ENCODE measurements at regions of chr5 and their contacts with region 1.

Region 1: GRCh38 chr5:69414885-69415583 is at the start of gene MARVELD2:
- DNase-seq: peak; percentile 96
- H3K4me3 ChIP-seq: peak within 1 kb of the TSS; percentile 81
- H3K4me3 Mint-ChIP-seq: peak within 1 kb of the TSS; percentile 92
- H3K27ac Mint-ChIP-seq: peak within 1 kb of the TSS; percentile 93
- H3K4me1 ChIP-seq: peaks cover 9% of the 10 kb centered on the region
- H3K4me1 Mint-ChIP-seq: peaks cover 22% of the 10 kb centered on the region
- H3K27me3 ChIP-seq: no peaks in the 10 kb centered on the region
- H3K27me3 Mint-ChIP-seq: no peaks in the 10 kb centered on the region
- CTCF ChIP-seq: peak; percentile 22 to 76
- total RNA-seq, gene MARVELD2: 47.2 and 50.3 TPM in 2 replicates

Region 2: DNA sequence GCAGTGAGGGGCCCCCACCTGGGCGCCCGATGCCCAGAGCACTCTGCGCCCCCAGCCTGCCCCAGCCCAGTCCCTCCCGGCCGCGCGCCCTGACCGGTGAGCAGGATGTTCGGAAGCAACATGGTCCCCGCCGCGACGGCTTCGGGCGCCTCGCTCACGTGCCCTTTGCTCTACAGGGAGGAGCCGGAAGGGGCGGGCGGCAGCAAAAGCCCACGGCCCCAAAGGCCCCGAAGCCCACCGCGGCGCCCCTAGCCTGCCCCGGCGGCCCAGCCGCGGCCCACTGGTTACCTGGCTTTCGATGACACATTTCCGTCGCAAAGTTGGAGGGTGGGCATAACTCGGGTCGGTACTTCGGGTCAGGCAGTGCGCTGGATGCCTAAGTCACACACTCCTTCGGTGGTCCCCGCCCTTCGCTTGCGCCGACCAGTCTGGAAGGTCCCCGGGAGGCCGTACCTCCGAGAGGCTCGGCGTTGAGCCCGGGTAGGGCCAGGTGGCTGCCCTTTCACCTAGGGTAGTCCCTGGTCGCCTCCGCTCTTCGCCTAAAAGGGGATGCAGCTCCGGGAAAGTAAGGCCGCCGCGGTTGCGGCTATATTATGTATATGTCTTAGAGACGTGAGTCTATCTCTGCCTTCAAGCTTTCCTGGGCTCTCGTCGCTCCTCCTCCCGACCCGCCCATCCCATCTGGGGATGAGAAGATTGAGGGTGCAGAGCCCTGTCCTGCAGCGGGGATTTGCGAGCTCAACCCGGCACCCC is 45.5 kb before region 1 on chr5 and contains the starts of genes AK6, RAD17 and TAF9:
- CTCF ChIA-PET with region 1: no interaction called
- POLR2A ChIA-PET with region 1: no interaction called
- intact Hi-C with region 1: loop called (anchors 5 kb)
- DNase-seq: peak; percentile 94 to 95
- H3K4me3 ChIP-seq: peak within 1 kb of the TSS; percentile 67
- H3K4me3 Mint-ChIP-seq: peak within 1 kb of the TSS; percentile 90
- H3K27ac Mint-ChIP-seq: peak within 1 kb of the TSS; percentile 99
- H3K4me1 ChIP-seq: peaks cover 15% of the 10 kb centered on the region
- H3K4me1 Mint-ChIP-seq: peaks cover 8% of the 10 kb centered on the region
- H3K27me3 ChIP-seq: no peaks in the 10 kb centered on the region
- H3K27me3 Mint-ChIP-seq: no peaks in the 10 kb centered on the region
- CTCF ChIP-seq: no peak
- total RNA-seq, gene AK6: 66.8 and 75.1 TPM in 2 replicates
- total RNA-seq, gene RAD17: 33.8 and 36.0 TPM in 2 replicates
- total RNA-seq, gene TAF9: 92.5 and 101 TPM in 2 replicates

Region 3: GRCh38 chr5:69432412-69433206 is 17.6 kb after region 1 on chr5:
- CTCF ChIA-PET with region 1: interaction called, 5 read pairs
- POLR2A ChIA-PET with region 1: no interaction called
- intact Hi-C with region 1: loop called (anchors 2 kb)
- DNase-seq: no peak
- H3K4me3 ChIP-seq: no peak overlapping the region
- H3K4me3 Mint-ChIP-seq: no peak overlapping the region
- H3K27ac Mint-ChIP-seq: peak overlapping the region; percentile 39
- H3K4me1 ChIP-seq: peaks cover under 1% of the 10 kb centered on the region; the same call in 1 of the 2 replicates
- H3K4me1 Mint-ChIP-seq: no peaks in the 10 kb centered on the region
- H3K27me3 ChIP-seq: no peaks in the 10 kb centered on the region
- H3K27me3 Mint-ChIP-seq: no peaks in the 10 kb centered on the region
- CTCF ChIP-seq: no peak

Region 4: GRCh38 chr5:69454460-69455249 is 39.6 kb after region 1 on chr5:
- CTCF ChIA-PET with region 1: no interaction called
- POLR2A ChIA-PET with region 1: interaction called, 4 read pairs
- intact Hi-C with region 1: loop called (anchors 1 kb)
- DNase-seq: peak; percentile 80 to 86
- H3K4me3 ChIP-seq: peak overlapping the region; percentile 9
- H3K4me3 Mint-ChIP-seq: peak overlapping the region; percentile 69
- H3K27ac Mint-ChIP-seq: peak overlapping the region; percentile 76
- H3K4me1 ChIP-seq: peaks cover 47% of the 10 kb centered on the region
- H3K4me1 Mint-ChIP-seq: peaks cover 20% of the 10 kb centered on the region
- H3K27me3 ChIP-seq: no peaks in the 10 kb centered on the region
- H3K27me3 Mint-ChIP-seq: no peaks in the 10 kb centered on the region
- CTCF ChIP-seq: no peak

Region 5: DNA sequence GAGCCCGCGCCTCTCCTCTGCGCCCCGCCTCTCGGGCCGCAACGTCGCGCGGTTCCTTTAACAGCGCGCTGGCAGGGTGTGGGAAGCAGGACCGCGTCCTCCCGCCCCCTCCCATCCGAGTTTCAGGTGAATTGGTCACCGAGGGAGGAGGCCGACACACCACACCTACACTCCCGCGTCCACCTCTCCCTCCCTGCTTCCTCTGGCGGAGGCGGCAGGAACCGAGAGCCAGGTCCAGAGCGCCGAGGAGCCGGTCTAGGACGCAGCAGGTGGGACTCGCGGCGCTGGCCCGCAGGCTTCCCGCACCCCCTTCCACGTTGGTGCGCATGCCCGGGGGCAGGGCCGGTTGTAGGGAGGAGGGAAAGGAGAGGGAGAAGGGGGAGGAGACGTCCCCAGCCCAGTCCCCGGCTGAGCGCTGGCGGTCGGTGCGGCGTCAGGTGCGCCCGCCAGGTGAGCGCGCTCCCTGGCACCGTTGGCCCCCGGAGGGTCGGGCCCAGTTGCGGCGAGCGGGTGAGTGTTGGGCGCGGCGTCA is 77.4 kb after region 1 on chr5 and contains the start of gene OCLN:
- CTCF ChIA-PET with region 1: no interaction called
- POLR2A ChIA-PET with region 1: no interaction called
- intact Hi-C with region 1: loop called (anchors 1 kb)
- DNase-seq: peak; percentile 96
- H3K4me3 ChIP-seq: peak within 1 kb of the TSS; percentile 99
- H3K4me3 Mint-ChIP-seq: peak within 1 kb of the TSS; percentile 100
- H3K27ac Mint-ChIP-seq: peak within 1 kb of the TSS; percentile 100
- H3K4me1 ChIP-seq: peaks cover 34% of the 10 kb centered on the region
- H3K4me1 Mint-ChIP-seq: peaks cover 43% of the 10 kb centered on the region
- H3K27me3 ChIP-seq: no peaks in the 10 kb centered on the region
- H3K27me3 Mint-ChIP-seq: no peaks in the 10 kb centered on the region
- CTCF ChIP-seq: peak in 1 of 2 experiments; percentile 2
- total RNA-seq, gene OCLN: 174 and 184 TPM in 2 replicates

Measured in Caco-2 (cell line).